CD4-positive, alpha-beta memory T cell (primary cell): ENCODE measurements at regions of chr1 and their contacts with region 1.

Region 1: DNA sequence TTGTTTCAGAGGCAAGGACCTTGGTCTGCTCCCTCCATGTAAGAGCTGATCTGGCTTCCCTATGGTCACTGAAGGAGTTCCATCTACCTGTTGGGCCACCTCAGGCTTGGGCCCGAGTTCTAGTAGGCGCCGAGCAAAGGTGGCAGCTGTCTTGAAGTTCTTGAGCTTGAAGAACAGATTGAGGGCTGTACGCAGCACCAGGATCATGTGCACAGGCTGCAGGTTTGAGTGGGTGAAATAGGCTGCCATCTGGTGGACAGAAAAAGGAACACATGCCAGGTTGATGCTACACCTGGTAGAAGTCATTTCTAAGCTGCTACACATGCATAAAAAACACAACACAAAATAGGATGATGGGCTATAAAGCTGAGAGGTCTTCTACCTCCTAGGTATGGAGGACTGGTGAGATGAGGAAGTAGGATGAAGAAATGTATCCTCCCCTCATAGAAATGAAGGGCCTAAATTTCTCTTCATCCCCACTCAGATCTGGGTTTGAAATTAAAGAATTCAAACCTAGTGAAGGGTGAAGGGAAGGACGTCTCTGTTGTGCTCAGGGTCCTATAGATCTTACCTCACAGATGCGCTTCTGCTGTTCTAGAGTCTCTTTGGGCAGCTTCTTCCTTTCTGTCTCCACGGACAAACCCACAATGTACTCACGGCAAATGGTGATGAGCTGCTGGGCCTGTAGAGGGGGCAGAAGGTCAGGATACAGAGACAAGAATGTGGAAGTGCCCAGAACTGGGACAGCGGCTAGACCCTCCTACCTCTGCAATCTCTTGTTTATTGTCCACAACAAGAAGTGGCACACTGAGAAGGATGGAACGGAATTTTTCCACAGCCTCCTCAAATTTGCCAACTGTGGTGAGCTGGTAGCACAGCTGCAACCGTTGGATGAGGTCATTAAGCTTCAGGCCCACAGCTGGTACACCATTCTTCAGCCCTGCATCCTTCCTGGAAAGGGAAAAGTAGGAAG is 6.6 kb upstream of the PEX19 start:
- DNase-seq: peak; percentile 75 to 79 (median 76)
- H3K4me3 ChIP-seq: no peak overlapping the region
- H3K4me3 Mint-ChIP-seq: no peak overlapping the region
- H3K27ac ChIP-seq: no peak overlapping the region
- H3K27ac Mint-ChIP-seq: peak overlapping the region; percentile 0 to 90 (median 77)
- H3K4me1 ChIP-seq: no peaks in the 10 kb centered on the region
- H3K4me1 Mint-ChIP-seq: peaks cover 4 to 10% (median 4%) of the 10 kb centered on the region in 4 donors
- H3K27me3 ChIP-seq: no peaks in the 10 kb centered on the region
- H3K27me3 Mint-ChIP-seq: no peaks in the 10 kb centered on the region

Region 2: DNA sequence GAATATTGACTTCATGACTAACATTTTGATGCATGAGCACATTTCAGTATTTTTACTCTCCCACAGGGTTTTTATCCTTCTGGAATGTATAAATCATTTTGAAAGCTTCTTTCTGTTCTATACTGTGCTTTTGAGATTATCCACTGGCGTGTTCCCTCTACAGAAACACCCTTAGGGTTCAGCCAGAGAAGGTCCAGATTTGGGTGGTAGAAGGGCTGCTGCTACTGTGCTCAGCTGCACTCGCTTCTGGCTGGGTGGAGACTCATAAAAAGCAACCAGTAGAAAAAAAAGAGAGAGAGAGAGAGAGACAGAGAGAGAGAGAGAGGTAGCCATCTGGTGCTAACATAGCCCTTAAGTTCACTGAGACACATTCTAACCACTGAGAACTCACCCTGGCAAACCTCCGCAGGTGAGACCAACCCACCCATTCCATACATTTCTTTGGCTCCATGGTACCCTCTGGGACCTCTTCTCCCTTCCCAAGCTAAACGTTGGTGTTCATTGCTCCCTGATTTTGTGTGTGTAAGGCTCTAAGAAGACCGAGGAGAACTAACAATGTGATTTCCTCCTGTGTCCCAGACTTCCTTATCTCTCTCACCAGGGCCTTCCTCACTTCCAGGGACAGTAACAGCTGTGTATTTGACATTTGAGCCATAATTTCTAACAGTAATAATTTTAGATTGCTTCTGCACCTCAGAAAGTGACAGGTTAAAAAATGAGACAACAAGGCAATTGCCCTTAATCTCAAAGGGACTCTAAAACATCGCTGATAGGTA is 696.7 kb before region 1 on chr1:
- CTCF ChIA-PET with region 1: no interaction called
- POLR2A ChIA-PET with region 1: no interaction called
- intact Hi-C with region 1: no loop called
- DNase-seq: no peak
- H3K4me3 ChIP-seq: no peak overlapping the region
- H3K4me3 Mint-ChIP-seq: no peak overlapping the region
- H3K27ac ChIP-seq: no peak overlapping the region
- H3K27ac Mint-ChIP-seq: no peak overlapping the region
- H3K4me1 ChIP-seq: no peaks in the 10 kb centered on the region
- H3K4me1 Mint-ChIP-seq: no peaks in the 10 kb centered on the region
- H3K27me3 ChIP-seq: no peaks in the 10 kb centered on the region
- H3K27me3 Mint-ChIP-seq: peaks cover 15 to 26% of the 10 kb centered on the region in 2 donors

Region 3: DNA sequence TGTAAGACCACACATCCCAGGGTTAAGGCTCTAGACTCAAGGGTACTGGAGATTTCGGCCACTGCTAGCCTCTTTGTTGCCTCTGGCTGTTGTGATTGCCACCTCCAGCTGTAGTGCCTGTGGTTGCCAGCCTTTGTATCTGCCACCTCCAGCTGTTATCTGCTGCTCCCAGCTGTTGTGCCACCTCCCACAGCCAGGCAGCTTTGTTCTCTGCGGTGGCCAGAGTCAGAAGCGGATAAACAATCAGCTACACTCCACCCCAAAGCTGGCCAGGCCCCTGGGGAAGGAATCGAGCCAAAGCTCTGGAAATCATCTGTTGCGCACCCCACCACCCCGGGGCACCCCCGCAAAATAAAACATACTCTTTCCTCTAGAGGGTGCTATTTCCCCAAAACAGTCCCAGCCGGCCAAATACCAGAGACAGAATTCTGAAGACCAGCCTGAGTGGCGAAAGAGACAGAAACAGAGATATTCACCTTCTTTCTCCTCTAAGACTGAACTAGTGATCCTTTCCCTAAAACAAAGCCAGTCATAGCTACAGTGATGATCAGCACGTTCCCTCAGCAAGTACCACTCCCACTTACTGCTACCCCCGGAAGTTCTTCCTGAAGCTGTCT is 244.9 kb before region 1 on chr1:
- CTCF ChIA-PET with region 1: interaction called, 7 read pairs
- POLR2A ChIA-PET with region 1: no interaction called
- intact Hi-C with region 1: loop called (anchors 1 kb)
- DNase-seq: peak; percentile 27 to 48 (median 47)
- H3K4me3 ChIP-seq: no peak overlapping the region
- H3K4me3 Mint-ChIP-seq: peak overlapping the region; percentile 57 to 79 (median 70)
- H3K27ac ChIP-seq: no peak overlapping the region
- H3K27ac Mint-ChIP-seq: peak overlapping the region in 3 of 7 donors; percentile 31 to 62 (median 62)
- H3K4me1 ChIP-seq: peaks cover 10% of the 10 kb centered on the region
- H3K4me1 Mint-ChIP-seq: peaks cover 6 to 12% (median 9%) of the 10 kb centered on the region in 4 donors
- H3K27me3 ChIP-seq: no peaks in the 10 kb centered on the region
- H3K27me3 Mint-ChIP-seq: peaks cover 12 to 18% of the 10 kb centered on the region in 2 donors

Region 4: GRCh38 chr1:160193091-160193819 is 98.3 kb before region 1 on chr1:
- CTCF ChIA-PET with region 1: interaction called, 177 read pairs
- POLR2A ChIA-PET with region 1: interaction called, 6 read pairs
- intact Hi-C with region 1: loop called (anchors 1 kb)
- DNase-seq: peak; percentile 67 to 75 (median 68)
- H3K4me3 ChIP-seq: no peak overlapping the region
- H3K4me3 Mint-ChIP-seq: no peak overlapping the region
- H3K27ac ChIP-seq: no peak overlapping the region
- H3K27ac Mint-ChIP-seq: no peak overlapping the region
- H3K4me1 ChIP-seq: peaks cover 9% of the 10 kb centered on the region
- H3K4me1 Mint-ChIP-seq: no peaks in the 10 kb centered on the region
- H3K27me3 ChIP-seq: no peaks in the 10 kb centered on the region
- H3K27me3 Mint-ChIP-seq: peaks cover 1 to 3% of the 10 kb centered on the region in 2 donors

Region 5: DNA sequence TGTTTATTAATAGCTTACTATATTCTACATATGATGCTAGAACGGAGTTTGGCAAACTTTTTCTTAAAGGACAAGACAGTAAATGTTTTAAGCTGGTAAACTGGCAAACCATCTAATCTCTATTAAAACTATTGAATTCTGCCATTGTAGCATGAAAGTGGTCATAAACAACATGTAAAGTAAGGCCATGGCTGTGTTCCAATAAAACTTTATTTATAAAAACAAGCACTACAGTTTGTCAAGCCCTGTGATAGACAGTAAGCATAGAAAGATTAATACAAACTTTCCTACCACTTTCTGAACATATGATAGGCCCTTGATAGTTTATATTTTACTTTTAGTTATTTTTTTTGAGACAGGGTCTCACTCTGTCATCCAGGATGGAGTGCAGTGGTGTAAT is 64.0 kb before region 1 on chr1:
- CTCF ChIA-PET with region 1: interaction called, 26 read pairs
- POLR2A ChIA-PET with region 1: interaction called, 3 read pairs
- intact Hi-C with region 1: no loop called
- DNase-seq: no peak
- H3K4me3 ChIP-seq: no peak overlapping the region
- H3K4me3 Mint-ChIP-seq: no peak overlapping the region
- H3K27ac ChIP-seq: no peak overlapping the region
- H3K27ac Mint-ChIP-seq: no peak overlapping the region
- H3K4me1 ChIP-seq: no peaks in the 10 kb centered on the region
- H3K4me1 Mint-ChIP-seq: peaks cover 0 to under 1% (median 0%) of the 10 kb centered on the region in 4 donors
- H3K27me3 ChIP-seq: no peaks in the 10 kb centered on the region
- H3K27me3 Mint-ChIP-seq: no peaks in the 10 kb centered on the region

Region 6: DNA sequence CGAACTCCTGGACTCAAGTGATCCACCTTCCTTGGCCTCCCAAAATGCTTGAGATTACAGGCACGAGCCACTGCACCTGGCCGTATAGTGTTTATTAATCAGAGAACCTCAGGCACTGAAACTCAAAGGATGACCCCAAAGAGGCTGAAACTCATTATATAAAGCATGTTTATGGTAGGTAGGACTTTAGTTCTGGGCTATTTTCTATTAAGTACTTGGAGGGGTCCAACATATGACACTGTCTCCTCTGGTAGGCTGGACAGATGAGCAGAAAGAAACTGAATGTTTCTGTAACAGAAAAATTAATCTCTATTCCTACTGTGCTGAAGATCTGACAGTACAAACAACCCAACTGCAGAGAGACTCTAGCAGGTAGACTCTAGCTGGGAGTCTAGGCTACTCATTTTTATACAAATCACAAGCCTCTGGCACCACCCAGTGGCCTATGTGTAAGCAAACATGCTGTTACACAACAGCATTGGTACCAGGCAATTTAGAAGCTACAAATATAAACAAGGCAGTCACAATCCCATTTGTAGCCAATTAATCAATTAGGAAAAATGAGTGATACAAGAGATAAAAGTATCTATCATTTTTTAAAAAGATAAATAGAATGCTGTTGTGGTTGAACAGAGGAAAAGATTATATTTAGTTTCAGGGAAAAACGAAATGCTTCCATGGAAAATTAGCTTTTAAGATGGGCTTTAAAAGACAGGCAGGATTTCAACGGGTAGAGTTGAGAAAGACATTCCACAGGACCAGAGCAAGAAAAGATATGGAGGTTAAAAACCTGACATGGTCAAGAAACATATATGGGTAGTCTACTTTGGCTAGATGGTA is 39.6 kb before region 1 on chr1:
- CTCF ChIA-PET with region 1: interaction called, 44 read pairs
- POLR2A ChIA-PET with region 1: no interaction called
- intact Hi-C with region 1: loop called (anchors 2 kb)
- DNase-seq: peak; percentile 52 to 72 (median 56)
- H3K4me3 ChIP-seq: no peak overlapping the region
- H3K4me3 Mint-ChIP-seq: no peak overlapping the region
- H3K27ac ChIP-seq: no peak overlapping the region
- H3K27ac Mint-ChIP-seq: peak overlapping the region; percentile 2 to 90 (median 79)
- H3K4me1 ChIP-seq: peaks cover 12% of the 10 kb centered on the region
- H3K4me1 Mint-ChIP-seq: peaks cover 15 to 20% (median 18%) of the 10 kb centered on the region in 4 donors
- H3K27me3 ChIP-seq: no peaks in the 10 kb centered on the region
- H3K27me3 Mint-ChIP-seq: no peaks in the 10 kb centered on the region

Region 7: DNA sequence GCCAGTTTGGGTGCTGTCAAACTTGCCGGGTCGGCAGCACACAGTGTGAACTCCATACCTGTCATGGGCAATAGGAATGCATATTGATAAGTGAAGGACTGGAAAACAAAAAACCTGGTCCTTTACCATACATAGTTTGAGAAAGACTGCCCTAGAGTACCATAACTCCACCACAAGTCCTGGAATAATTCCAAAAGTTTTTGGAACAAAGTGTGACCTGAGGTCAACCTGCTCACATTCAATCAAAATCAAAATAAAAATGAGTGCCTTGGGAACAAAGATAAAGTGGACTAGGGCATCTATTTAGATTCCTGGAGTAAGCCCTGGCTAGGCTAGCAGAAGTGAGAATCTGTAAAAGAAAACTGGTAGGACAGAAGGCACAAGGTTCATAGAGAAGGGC is 14.2 kb before region 1 on chr1:
- CTCF ChIA-PET with region 1: interaction called, 28 read pairs
- POLR2A ChIA-PET with region 1: interaction called, 6 read pairs
- intact Hi-C with region 1: no loop called
- DNase-seq: no peak
- H3K4me3 ChIP-seq: no peak overlapping the region
- H3K4me3 Mint-ChIP-seq: no peak overlapping the region
- H3K27ac ChIP-seq: no peak overlapping the region
- H3K27ac Mint-ChIP-seq: no peak overlapping the region
- H3K4me1 ChIP-seq: no peaks in the 10 kb centered on the region
- H3K4me1 Mint-ChIP-seq: peaks cover 0 to 7% (median 2%) of the 10 kb centered on the region in 4 donors
- H3K27me3 ChIP-seq: no peaks in the 10 kb centered on the region
- H3K27me3 Mint-ChIP-seq: no peaks in the 10 kb centered on the region

Region 8: DNA sequence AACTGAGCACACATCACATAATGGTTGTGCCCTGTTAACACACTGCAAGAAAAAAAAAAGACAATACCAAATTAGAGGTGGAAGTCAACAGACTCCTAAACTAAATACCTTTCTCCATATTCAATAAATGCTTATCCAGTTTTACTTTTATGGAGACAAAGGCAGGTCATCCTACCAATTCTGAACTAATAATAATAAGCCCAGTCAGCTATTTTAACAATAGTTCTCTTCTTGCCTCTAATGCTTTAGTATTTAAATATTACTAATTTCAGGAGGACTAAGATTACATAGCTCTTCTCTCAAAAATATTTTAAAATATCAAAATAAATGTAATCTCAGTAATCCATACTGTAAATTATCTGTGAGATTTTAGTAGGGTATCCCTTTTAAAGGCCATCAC is 41.0 kb after region 1 on chr1:
- CTCF ChIA-PET with region 1: interaction called, 22 read pairs
- POLR2A ChIA-PET with region 1: interaction called, 3 read pairs
- intact Hi-C with region 1: no loop called
- DNase-seq: no peak
- H3K4me3 ChIP-seq: no peak overlapping the region
- H3K4me3 Mint-ChIP-seq: no peak overlapping the region
- H3K27ac ChIP-seq: no peak overlapping the region
- H3K27ac Mint-ChIP-seq: no peak overlapping the region
- H3K4me1 ChIP-seq: no peaks in the 10 kb centered on the region
- H3K4me1 Mint-ChIP-seq: peaks cover 0 to 6% (median 4%) of the 10 kb centered on the region in 4 donors
- H3K27me3 ChIP-seq: no peaks in the 10 kb centered on the region
- H3K27me3 Mint-ChIP-seq: no peaks in the 10 kb centered on the region